ENCODE measurements at regions of chr17 and their contacts with region 1.

Region 1: DNA sequence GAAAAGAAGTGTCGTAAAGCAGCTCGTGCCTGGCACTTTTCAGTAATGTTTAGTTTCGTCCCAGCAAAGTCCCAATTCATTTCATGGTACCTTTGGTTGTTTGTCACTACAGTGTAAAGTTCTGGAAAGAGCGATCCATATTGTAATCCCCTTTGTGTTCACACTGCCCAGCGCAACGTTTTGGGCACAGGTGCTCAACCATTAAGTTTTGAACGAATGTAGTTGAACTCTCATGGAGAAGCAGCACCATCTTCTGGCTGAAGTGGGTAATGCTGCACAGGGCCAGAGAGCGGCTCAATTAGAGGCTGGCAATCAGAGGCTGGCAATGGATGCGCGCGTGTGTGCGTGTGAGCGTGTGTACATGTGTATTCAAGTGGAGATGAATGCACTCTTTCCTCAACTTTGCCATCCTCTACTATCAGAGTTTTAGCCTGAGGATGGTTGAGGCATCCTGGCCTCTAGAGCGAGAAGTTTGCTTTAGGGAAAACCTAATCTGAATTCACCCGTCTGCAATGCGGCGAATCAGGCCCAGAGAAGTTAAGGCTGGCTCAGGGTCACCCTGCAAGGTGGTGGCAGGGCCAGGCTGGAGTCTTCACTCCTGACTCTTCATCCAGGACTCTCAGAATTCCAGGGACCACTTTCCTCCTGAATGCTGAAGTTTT is 29.9 kb downstream of the DYNLL2 start:
- DNase-seq: peak; percentile 79
- ATAC-seq: peak; percentile 93
- H3K4me3 ChIP-seq: no peak overlapping the region
- H3K27ac ChIP-seq: no peak overlapping the region
- H3K4me1 ChIP-seq: peaks cover 0 to 3% of the 10 kb centered on the region in 2 experiments; a peak in 1 of 4 replicates
- H3K27me3 ChIP-seq: peaks cover 12% of the 10 kb centered on the region; the same call in 1 of the 2 replicates
- CTCF ChIP-seq: peak; percentile 95 to 100 (median 99)
- POLR2A ChIP-seq: no peak
- RAD21 ChIP-seq: peak; percentile 100

Region 2: GRCh38 chr17:57597531-57598453 is 515.3 kb before region 1 on chr17:
- CTCF ChIA-PET with region 1: interaction called, 3 read pairs
- POLR2A ChIA-PET with region 1: no interaction called
- RAD21 ChIA-PET with region 1: no interaction called
- intact Hi-C with region 1: loop called (anchors 5 kb)
- DNase-seq: peak; percentile 65
- ATAC-seq: peak; percentile 91
- H3K4me3 ChIP-seq: no peak overlapping the region
- H3K27ac ChIP-seq: peak overlapping the region; percentile 37; the same call in 1 of the 2 replicates
- H3K4me1 ChIP-seq: peaks cover 5 to 13% of the 10 kb centered on the region in 2 experiments; a peak in 3 of 4 replicates
- H3K27me3 ChIP-seq: no peaks in the 10 kb centered on the region
- CTCF ChIP-seq: peak; percentile 93 to 98 (median 98)
- POLR2A ChIP-seq: no peak
- RAD21 ChIP-seq: peak; percentile 80

Region 3: GRCh38 chr17:57747221-57748017 is 365.7 kb before region 1 on chr17:
- CTCF ChIA-PET with region 1: no interaction called
- POLR2A ChIA-PET with region 1: no interaction called
- RAD21 ChIA-PET with region 1: no interaction called
- intact Hi-C with region 1: loop called (anchors 10 kb)
- DNase-seq: peak; percentile 76
- ATAC-seq: peak; percentile 93
- H3K4me3 ChIP-seq: no peak overlapping the region
- H3K27ac ChIP-seq: no peak overlapping the region
- H3K4me1 ChIP-seq: no peaks in the 10 kb centered on the region
- H3K27me3 ChIP-seq: peaks cover 10% of the 10 kb centered on the region; the same call in 1 of the 2 replicates
- CTCF ChIP-seq: peak; percentile 92 to 98 (median 93)
- POLR2A ChIP-seq: no peak
- RAD21 ChIP-seq: peak; percentile 96

Region 4: GRCh38 chr17:57849874-57850754 is 263.0 kb before region 1 on chr17 and contains the start of gene MRPS23:
- CTCF ChIA-PET with region 1: no interaction called
- POLR2A ChIA-PET with region 1: interaction called, 4 read pairs
- RAD21 ChIA-PET with region 1: no interaction called
- intact Hi-C with region 1: loop called (anchors 2 kb)
- DNase-seq: peak; percentile 98
- ATAC-seq: peak; percentile 92
- H3K4me3 ChIP-seq: peak within 1 kb of the TSS; percentile 88 to 94
- H3K27ac ChIP-seq: peak within 1 kb of the TSS; percentile 71
- H3K4me1 ChIP-seq: peaks cover 12 to 34% of the 10 kb centered on the region in 2 experiments
- H3K27me3 ChIP-seq: no peaks in the 10 kb centered on the region
- CTCF ChIP-seq: no peak
- POLR2A ChIP-seq: peak; percentile 11
- RAD21 ChIP-seq: no peak
- total RNA-seq, gene MRPS23: 109 TPM

Region 5: DNA sequence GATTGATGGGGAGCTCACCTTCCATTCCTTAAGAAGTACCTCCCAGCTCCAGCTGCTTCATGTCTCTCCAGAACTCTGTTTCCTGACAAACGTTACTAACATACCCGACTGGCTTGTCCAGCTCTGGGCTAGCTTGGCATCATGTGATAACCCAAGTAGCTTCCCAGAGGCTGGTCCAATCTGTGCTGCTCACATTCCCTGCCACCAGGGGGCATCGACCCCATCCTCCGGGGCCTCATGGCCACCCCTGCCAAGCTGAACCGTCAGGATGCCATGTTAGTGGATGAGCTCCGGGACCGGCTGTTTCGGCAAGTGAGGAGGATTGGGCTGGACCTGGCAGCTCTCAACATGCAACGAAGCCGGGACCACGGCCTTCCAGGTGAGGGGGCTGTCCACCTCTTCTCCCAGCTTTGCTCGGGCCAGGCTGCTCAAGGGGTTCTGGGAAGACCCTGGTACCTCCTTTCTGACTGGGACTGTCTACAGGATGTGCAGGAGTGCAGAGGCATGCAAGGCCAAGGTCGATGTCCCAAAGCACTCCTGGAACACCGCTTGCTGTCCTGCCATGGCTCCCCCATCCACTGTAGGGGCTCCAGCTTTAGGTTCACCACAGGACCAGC is 87.0 kb after region 1 on chr17:
- CTCF ChIA-PET with region 1: no interaction called
- POLR2A ChIA-PET with region 1: no interaction called
- RAD21 ChIA-PET with region 1: no interaction called
- intact Hi-C with region 1: no loop called
- DNase-seq: peak; percentile 63
- ATAC-seq: peak; percentile 98
- H3K4me3 ChIP-seq: no peak overlapping the region
- H3K27ac ChIP-seq: no peak overlapping the region
- H3K4me1 ChIP-seq: peaks cover 0 to 3% of the 10 kb centered on the region in 2 experiments; a peak in 1 of 4 replicates
- H3K27me3 ChIP-seq: no peaks in the 10 kb centered on the region; the same call in 1 of the 2 replicates
- CTCF ChIP-seq: peak; percentile 58 to 90 (median 88)
- POLR2A ChIP-seq: no peak
- RAD21 ChIP-seq: no peak; the same call in 1 of the 2 replicates

Measured in HCT116 (cell line).